Activated CD4-positive, alpha-beta T cell treated with anti-CD3 and anti-CD28 coated beads for 36 hours (primary cell): ENCODE measurements at regions of chr19 and their contacts with region 1.

Region 1: DNA sequence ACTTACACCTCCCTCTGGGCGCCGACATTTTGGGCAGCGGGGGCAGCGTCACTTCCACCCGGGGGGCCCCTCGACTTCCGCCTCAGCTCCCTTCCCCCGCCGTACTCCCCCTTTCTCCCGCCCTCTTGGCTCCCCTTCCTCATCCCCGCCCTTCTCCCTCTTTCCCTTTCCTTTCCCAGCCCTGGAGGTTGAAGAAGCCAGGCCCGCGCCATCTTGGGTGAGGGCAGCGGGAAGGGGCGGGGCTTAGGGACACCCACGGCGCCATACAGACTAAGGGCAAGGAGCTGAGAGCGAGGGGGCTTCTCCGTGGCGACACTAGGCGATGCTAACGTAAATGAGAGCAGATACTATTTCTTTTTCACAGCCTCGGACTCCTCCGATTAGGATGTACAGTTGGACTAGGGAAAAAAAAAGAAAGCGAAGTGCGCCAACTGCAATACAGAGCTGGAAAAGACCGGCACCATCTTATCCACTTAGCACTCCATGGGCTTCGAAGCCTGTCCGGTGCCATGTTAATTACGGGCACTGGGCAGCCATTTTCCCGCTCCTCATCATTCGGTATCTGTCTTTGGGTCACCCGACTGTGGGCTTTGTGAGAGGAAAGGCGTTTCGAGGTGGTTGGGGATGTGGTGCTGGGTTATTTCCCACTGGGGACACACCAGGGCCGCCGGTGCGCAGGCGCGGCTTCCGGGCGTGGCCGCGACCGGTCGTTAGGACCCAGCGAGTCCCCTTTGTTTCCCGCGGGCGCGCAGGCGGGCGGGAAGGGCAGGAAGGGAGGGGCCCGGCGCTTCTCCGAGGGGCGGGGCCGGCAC is at the start of gene FIZ1:
- DNase-seq: peak; percentile 98
- ATAC-seq: peak; percentile 79
- H3K4me3 Mint-ChIP-seq: peak within 1 kb of the TSS; percentile 89
- H3K27ac Mint-ChIP-seq: peak within 1 kb of the TSS; percentile 99
- H3K4me1 Mint-ChIP-seq: peaks cover 31% of the 10 kb centered on the region
- H3K27me3 Mint-ChIP-seq: no peaks in the 10 kb centered on the region
- total RNA-seq, gene FIZ1: 13.6 to 14.7 TPM

Region 2: GRCh38 chr19:54189735-54190502 is 1409.8 kb before region 1 on chr19:
- CTCF ChIA-PET with region 1: no interaction called
- POLR2A ChIA-PET with region 1: no interaction called
- intact Hi-C with region 1: loop called in 1 of 2 experiments (anchors 1 kb)
- DNase-seq: peak; percentile 100
- ATAC-seq: peak; percentile 69
- H3K4me3 Mint-ChIP-seq: peak overlapping the region; percentile 76
- H3K27ac Mint-ChIP-seq: peak overlapping the region; percentile 96
- H3K4me1 Mint-ChIP-seq: peaks cover 34% of the 10 kb centered on the region
- H3K27me3 Mint-ChIP-seq: no peaks in the 10 kb centered on the region

Region 3: DNA sequence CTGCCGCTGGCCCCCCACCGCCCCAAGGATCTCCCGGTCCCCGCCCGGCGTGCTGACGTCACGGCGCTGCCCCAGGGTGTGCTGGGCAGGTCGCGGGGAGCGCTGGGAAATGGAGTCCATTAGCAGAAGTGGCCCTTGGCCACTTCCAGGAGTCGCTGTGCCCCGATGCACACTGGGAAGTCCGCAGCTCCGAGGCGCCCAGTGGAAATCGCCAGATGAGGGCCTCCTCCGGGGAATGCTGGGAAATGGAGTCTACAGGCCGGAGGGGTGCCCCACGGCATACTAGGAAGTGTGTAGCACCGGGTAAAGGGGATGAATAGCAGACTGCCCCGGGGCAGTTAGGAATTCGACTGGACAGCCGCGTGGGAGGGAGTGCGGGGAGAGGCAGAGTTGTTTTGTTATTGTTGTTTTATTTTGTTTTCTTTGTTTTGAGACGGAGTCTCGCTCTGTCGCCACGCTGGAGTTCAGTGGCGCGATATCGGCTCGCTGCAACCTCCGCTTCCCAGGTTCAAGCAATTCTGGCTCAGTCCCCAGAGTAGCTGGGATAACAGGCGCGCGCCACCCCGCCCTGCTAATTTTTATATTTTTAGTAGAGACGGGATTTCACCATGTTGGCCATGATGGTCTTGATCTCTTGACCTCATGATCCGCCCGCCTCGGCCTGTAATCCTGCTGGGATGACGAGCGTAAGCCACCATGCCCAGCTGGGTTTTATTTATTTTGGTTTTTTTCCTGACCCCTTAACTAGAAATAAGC is 481.9 kb before region 1 on chr19 and contains the start of gene PPP1R12C:
- CTCF ChIA-PET with region 1: no interaction called
- POLR2A ChIA-PET with region 1: no interaction called
- intact Hi-C with region 1: loop called in 1 of 2 experiments (anchors 1 kb)
- DNase-seq: peak; percentile 99
- ATAC-seq: peak; percentile 96
- H3K4me3 Mint-ChIP-seq: peak within 1 kb of the TSS; percentile 95
- H3K27ac Mint-ChIP-seq: peak within 1 kb of the TSS; percentile 97
- H3K4me1 Mint-ChIP-seq: peaks cover 24% of the 10 kb centered on the region
- H3K27me3 Mint-ChIP-seq: peaks cover 2% of the 10 kb centered on the region
- total RNA-seq, gene PPP1R12C: 66.1 to 69.8 TPM

Region 4: DNA sequence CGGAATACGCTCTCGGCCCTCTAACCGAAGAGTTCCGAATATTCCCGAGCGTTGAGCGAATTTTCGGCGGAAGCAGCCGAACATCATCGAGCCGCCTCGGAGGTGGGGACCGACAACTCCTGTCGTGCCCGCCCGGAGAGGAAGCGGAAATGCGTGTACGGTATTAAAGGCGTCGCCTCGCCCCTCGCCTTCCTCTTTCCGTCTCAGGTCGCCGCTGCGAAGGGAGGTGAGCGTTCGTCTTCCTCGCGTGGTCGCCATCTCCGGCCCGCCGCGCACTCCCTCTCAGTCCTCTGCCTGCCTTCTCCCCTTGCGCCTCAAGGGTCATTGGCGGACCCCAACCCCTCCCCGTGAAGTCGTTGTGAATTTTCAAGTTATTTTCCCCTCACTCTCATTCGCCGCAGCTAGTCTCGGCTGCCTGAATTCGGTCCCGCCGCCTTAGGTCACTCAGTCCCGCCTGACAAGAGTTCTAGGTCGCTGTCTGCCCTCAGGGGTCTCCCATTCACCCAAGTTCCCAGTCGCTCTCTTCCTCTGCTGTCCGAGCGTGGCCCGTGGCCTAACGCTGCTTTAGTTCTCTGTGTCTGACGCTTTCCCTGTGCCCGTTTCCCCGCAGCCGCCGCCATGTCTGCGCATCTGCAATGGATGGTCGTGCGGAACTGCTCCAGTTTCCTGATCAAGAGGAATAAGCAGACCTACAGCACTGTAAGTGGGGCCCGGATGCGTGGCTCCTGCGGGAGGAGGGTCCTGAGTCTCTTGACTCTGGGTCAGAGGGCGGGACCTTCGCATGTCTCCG is 213.7 kb before region 1 on chr19 and contains the start of gene RPL28:
- CTCF ChIA-PET with region 1: no interaction called
- POLR2A ChIA-PET with region 1: interaction called, 3 read pairs
- intact Hi-C with region 1: loop called in 1 of 2 experiments (anchors 1 kb)
- DNase-seq: peak; percentile 98
- ATAC-seq: peak; percentile 85
- H3K4me3 Mint-ChIP-seq: peak within 1 kb of the TSS; percentile 89
- H3K27ac Mint-ChIP-seq: peak within 1 kb of the TSS; percentile 98
- H3K4me1 Mint-ChIP-seq: peaks cover 51% of the 10 kb centered on the region
- H3K27me3 Mint-ChIP-seq: no peaks in the 10 kb centered on the region
- total RNA-seq, gene RPL28: 2,751 to 4,078 TPM

Region 5: DNA sequence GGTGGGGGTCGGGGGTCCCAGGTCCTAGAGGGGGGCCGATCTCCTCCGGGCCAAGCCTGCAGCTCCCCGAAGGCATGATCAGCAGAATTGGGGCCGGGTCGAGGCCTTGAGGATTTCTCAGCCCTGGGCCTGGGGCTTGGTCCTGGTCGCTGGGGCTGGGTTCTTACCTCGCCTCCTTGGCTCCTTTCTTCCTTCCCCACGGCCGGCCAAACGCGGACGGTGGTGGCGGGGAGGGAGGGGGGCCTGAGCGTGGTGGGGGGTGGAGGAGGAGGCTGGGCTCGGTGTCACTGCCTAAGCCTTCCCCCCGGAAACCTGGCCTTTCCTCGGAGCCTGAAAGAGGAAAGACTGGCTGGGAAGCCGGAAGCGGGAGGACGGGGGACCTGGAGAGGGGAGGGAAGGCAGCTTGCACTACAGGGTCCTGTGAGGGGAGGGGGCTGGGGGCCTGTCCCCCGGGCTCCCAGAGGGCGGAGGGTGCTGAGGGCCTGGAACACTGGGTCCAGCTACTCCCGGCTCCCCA is 19.0 kb before region 1 on chr19 and contains the start of gene ZNF579:
- CTCF ChIA-PET with region 1: interaction called, 3 read pairs
- POLR2A ChIA-PET with region 1: interaction called, 6 read pairs
- intact Hi-C with region 1: loop called (anchors 1 to 2 kb)
- DNase-seq: peak; percentile 89
- ATAC-seq: peak; percentile 79
- H3K4me3 Mint-ChIP-seq: peak within 1 kb of the TSS; percentile 83
- H3K27ac Mint-ChIP-seq: peak within 1 kb of the TSS; percentile 78
- H3K4me1 Mint-ChIP-seq: peaks cover 23% of the 10 kb centered on the region
- H3K27me3 Mint-ChIP-seq: no peaks in the 10 kb centered on the region
- total RNA-seq, gene ZNF579: 7.2 to 7.5 TPM

Region 6: GRCh38 chr19:55653758-55654539 is 54.3 kb after region 1 on chr19:
- CTCF ChIA-PET with region 1: interaction called, 7 read pairs
- POLR2A ChIA-PET with region 1: interaction called, 12 read pairs
- intact Hi-C with region 1: loop called (anchors 1 kb)
- DNase-seq: peak; percentile 99
- ATAC-seq: peak; percentile 84
- H3K4me3 Mint-ChIP-seq: peak overlapping the region; percentile 86
- H3K27ac Mint-ChIP-seq: peak overlapping the region; percentile 98
- H3K4me1 Mint-ChIP-seq: peaks cover 37% of the 10 kb centered on the region
- H3K27me3 Mint-ChIP-seq: no peaks in the 10 kb centered on the region